ENCODE measurements at regions of chr1 and their contacts with region 1.

Region 1: DNA sequence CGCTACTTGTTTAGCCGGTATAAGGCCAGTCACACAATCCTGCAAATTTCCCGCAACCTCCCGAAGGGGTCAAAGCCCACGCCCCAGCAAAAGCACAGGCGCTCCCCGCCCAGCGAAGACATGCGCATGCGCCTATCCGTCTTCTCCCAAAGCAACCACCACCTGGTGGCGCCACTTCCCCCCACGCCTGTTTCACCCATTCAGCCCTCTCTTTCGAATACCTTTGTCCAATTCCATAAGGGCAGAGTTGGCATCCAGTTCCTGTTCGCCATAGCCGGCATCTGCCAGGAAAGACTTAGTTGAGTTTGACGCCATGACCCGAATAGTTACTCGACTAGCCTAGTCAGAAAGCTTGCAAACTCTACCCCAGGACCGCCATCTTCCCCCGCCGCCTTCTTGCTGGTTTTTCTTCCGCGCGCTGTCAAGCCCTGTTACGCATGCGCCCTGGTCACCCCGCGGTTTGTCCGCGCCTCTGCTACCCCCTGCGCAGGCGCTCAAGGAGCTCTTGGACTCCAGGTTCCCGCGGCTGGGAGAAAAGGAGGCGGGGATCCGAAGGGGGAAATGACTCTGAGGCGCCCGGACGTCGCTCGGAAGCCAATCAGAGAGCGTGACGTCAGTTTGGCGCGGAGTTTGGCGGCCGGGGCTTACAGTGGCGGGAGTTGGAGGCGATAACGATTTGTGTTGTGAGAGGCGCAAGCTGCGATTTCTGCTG is at the starts of genes DTL and INTS7:
- DNase-seq: peak; percentile 99
- H3K4me3 ChIP-seq: peak within 1 kb of the TSS; percentile 47 to 77 (median 65)
- H3K27ac ChIP-seq: peak within 1 kb of the TSS; percentile 83 to 93 (median 90)
- H3K4me1 ChIP-seq: peaks cover 18 to 70% (median 49%) of the 10 kb centered on the region in 6 donors
- H3K27me3 ChIP-seq: no peaks in the 10 kb centered on the region
- CTCF ChIP-seq: peak; percentile 88 to 97 (median 94)
- POLR2A ChIP-seq: no peak
- total RNA-seq, gene DTL: 5.8 to 15.7 (median 12.5) TPM
- total RNA-seq, gene INTS7: 11.1 to 16.5 (median 14.8) TPM

Region 2: DNA sequence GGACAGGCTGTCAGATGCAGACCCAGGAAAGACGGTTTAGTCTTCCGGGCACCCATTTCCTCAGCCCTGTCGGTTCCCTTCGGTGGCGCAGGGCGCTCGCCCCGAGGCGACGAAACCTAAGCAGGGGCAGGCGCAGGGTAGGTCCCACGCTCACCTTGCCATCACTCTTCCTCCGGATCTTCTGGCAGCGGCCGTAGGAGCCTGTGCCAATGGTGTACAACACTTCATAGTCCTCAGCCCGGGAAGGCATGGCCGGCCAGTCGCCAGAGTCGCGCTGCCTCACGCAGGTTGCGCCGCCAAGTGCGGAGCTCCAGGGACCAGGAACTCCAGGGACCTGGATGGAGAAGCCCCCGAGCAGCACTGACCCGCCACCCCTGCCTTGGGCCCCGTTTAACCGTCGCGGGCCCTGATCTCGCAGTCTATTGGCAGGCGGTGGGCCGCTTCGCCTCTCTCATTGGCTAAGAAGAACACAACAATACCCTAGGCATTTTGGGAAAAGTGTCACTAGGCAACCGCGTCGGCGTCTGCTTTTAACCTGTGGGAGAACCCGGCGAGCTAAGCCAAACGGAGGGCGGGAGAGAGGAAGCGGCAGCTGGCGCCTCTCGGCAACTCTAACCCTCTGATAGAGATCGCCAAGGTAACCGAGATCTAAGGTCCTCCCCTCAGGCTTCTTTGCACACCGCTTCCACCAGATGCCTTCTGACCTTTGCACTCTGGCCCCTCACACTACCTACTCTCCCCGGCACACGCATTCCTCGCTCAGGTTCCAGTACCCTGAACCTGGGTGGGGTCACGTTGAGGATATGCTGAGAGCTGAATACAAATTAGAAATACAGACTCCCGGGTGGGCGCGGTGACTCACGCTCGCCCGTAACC is 359.8 kb before region 1 on chr1 and contains the start of gene NEK2:
- intact Hi-C with region 1: loop called (anchors 10 kb)
- DNase-seq: peak; percentile 95
- H3K4me3 ChIP-seq: peak within 1 kb of the TSS; percentile 56 to 86 (median 62)
- H3K27ac ChIP-seq: peak within 1 kb of the TSS in 3 of 8 donors; percentile 19 to 44 (median 37)
- H3K4me1 ChIP-seq: peaks cover 0 to 23% (median 18%) of the 10 kb centered on the region in 6 donors
- H3K27me3 ChIP-seq: no peaks in the 10 kb centered on the region
- CTCF ChIP-seq: peak in 1 of 11 experiments; percentile 3
- POLR2A ChIP-seq: no peak
- total RNA-seq, gene NEK2: 0.38 to 5.5 (median 2.4) TPM

Region 3: DNA sequence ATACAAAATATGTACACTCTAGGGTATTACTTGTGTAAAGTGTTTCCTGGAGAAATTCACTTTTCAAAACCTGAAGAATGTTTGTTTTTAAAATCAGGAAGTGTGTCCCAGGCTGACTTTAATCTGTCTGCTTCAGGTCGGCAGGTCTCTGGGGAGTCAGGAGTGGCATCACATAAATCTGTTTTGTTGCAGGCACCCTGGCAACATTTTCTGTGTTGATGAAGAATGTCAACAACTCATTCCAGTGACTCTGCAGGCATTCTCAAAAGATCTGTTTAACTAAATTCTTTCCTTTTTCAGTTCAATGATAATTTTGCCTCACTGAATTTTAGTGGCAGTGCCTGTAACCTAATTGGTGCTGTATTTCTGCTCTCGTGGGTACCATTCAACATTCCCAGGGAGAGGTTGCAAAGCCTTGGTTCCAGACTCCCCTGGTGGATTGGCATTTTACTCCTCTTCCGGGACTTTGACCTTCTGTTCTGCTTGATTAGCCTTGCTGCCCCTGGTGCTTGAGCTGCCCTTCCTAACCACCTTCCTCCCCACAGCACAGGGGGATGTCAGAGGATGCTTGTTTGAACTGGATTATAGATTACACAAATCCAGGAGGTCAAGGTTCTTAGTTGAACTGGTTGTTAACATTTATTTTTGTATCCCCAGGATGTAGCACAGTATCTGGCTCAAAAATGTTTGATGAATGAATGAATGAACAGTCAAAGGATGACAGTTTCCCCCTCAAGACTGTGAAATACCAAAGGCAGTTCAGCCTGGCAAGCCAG is 149.3 kb before region 1 on chr1:
- intact Hi-C with region 1: no loop called
- DNase-seq: no peak
- H3K4me3 ChIP-seq: no peak overlapping the region
- H3K27ac ChIP-seq: no peak overlapping the region
- H3K4me1 ChIP-seq: no peaks in the 10 kb centered on the region
- H3K27me3 ChIP-seq: no peaks in the 10 kb centered on the region
- CTCF ChIP-seq: no peak
- POLR2A ChIP-seq: no peak